AG04450 (cell line): ENCODE measurements at regions of chr5 and their contacts with region 1.

Region 1: GRCh38 chr5:88724201-88724600 is 158.8 kb downstream of the MEF2C start:
- DNase-seq: no peak
- H3K4me3 ChIP-seq: no peak overlapping the region
- H3K27ac ChIP-seq: no peak overlapping the region
- H3K27me3 ChIP-seq: no peaks in the 10 kb centered on the region
- CTCF ChIP-seq: peak; percentile 42

Region 2: GRCh38 chr5:88713818-88714217 is 10.4 kb before region 1 on chr5:
- CTCF ChIA-PET with region 1: interaction called, 19 read pairs
- POLR2A ChIA-PET with region 1: no interaction called
- DNase-seq: no peak
- H3K4me3 ChIP-seq: no peak overlapping the region
- H3K27ac ChIP-seq: no peak overlapping the region
- H3K27me3 ChIP-seq: no peaks in the 10 kb centered on the region
- CTCF ChIP-seq: no peak